HEK293 (cell line): ENCODE measurements at regions of chr7 and their contacts with region 1.

Region 1: DNA sequence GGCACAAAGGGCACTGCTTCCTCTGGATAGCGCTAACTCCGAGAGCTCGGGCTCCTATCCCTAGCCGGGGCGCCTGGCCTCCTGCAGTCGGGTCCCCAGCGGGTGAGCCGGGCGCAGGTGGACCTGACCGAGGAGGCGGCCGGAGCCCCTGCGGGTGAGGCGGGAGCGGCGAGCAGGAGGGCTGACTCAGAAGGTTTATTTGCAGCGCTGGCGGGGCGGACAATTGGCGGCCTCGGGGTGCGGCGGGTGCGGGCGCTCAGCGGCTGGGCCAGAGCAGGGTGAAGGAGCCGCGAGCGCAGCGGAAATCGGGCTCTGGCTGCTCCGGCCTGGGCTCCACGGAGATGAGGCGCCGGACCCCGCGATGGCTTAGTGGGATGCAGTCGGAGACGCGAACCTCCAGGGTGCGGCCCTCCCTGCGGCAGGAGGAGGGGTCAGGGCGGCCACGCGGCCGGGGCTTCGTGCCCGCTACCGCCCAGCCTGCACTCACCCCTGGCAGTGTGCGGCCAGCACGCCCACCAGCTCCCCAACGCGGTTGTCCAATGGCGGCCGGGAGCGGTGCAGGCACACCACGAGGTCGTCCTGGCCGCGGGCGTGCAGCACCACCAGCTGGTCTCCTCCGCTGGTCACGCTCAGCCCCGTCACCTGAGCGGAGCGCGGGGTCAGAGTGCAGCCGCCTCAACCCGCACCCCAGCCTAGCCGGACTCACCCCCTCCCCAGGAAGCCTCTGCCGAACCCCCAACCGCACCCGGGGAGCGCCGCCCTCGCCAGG is 16.1 kb downstream of the MYO1G start:
- H3K4me3 ChIP-seq: no peak overlapping the region
- H3K27ac ChIP-seq: no peak overlapping the region
- H3K4me1 ChIP-seq: no peaks in the 10 kb centered on the region
- CTCF ChIP-seq: no peak

Region 2: DNA sequence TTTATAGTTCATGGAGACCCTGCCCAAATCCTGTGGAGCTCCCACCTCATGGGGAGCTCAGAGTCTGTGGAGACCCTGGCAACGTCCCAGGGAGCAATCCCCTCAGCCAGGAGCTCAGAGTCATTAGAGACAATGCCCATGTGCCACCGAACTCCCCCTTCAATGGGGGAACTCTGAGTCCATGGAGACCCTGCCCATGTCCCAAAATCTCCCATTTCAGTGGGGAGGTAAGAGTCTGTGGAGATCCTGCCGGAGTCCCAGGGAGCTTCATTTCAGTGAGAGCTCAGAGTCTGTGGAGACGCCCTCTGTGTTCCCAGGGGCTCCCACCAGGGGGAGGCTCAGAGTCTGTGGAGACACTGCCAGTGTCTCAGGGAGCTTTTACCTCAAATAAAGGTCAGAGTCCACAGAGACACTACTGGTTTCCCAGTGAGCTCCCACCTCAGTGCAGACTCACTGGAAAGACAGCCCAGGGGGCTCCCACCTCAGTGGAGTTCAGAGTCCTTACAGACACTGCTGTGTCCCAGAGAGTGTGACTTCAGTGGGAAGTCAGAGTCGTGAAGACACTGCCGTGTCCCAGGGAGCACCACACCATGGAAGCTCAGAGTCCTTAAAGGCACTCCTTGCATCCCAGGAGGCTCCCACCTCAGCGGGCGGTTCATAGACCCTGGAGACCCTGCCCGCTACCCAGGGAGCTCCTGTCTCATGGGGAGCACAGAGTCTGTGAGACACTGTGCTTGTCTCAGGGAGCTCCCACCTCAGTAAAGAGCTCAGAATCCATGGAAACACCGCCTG is 11.1 kb after region 1 on chr7:
- CTCF ChIA-PET with region 1: interaction called, 18 read pairs
- POLR2A ChIA-PET with region 1: no interaction called
- H3K4me3 ChIP-seq: no peak overlapping the region
- H3K27ac ChIP-seq: no peak overlapping the region
- H3K4me1 ChIP-seq: no peaks in the 10 kb centered on the region
- CTCF ChIP-seq: no peak